ENCODE measurements at regions of chr17 and their contacts with region 1.

Region 1: DNA sequence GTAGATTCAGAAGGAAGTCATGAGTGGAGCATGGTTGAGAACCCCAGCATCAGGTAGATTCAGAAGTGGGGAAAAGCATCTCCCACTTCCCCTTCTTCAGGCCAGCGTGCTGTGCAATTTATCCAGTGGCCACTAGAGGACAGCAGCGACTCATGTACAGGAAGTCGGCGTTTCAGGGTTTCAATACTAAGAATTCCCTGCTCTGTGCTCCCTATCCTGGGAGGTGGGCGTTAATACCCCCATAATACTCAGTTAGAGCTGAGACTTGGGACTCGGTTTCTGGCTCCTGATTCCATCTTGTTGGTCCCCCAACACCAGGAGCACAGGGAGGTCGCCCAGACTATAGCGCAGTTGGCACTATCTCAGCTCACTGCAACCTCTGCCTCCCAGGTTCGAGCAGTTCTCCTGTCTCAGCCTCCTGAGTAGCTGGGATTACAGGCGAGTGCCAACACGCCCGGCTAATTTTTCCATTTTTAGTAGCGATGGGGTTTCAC is 75.3 kb upstream of the AMZ2 start:
- DNase-seq: peak; percentile 62 to 87 (median 72)
- ATAC-seq: peak; percentile 82
- H3K4me3 ChIP-seq: no peak overlapping the region
- H3K4me3 Mint-ChIP-seq: no peak overlapping the region
- H3K27ac ChIP-seq: no peak overlapping the region
- H3K27ac Mint-ChIP-seq: no peak overlapping the region
- H3K4me1 ChIP-seq: peaks cover 6% of the 10 kb centered on the region
- H3K4me1 Mint-ChIP-seq: peaks cover 17% of the 10 kb centered on the region
- H3K27me3 ChIP-seq: no peaks in the 10 kb centered on the region
- H3K27me3 Mint-ChIP-seq: no peaks in the 10 kb centered on the region
- CTCF ChIP-seq: peak; percentile 99

Region 2: GRCh38 chr17:67959288-67959900 is 213.1 kb before region 1 on chr17:
- CTCF ChIA-PET with region 1: no interaction called
- POLR2A ChIA-PET with region 1: no interaction called
- intact Hi-C with region 1: loop called in 1 of 2 experiments (anchors 10 kb)
- DNase-seq: no peak
- ATAC-seq: no peak
- H3K4me3 ChIP-seq: no peak overlapping the region
- H3K4me3 Mint-ChIP-seq: no peak overlapping the region
- H3K27ac ChIP-seq: no peak overlapping the region
- H3K27ac Mint-ChIP-seq: peak overlapping the region; percentile 32
- H3K4me1 ChIP-seq: no peaks in the 10 kb centered on the region
- H3K4me1 Mint-ChIP-seq: peaks cover 5% of the 10 kb centered on the region
- H3K27me3 ChIP-seq: no peaks in the 10 kb centered on the region
- H3K27me3 Mint-ChIP-seq: no peaks in the 10 kb centered on the region
- CTCF ChIP-seq: no peak

Region 3: GRCh38 chr17:68205251-68205807 is 32.8 kb after region 1 on chr17:
- CTCF ChIA-PET with region 1: interaction called, 34 read pairs
- POLR2A ChIA-PET with region 1: interaction called, 15 read pairs
- intact Hi-C with region 1: loop called (anchors 1 to 2 kb)
- DNase-seq: peak; percentile 82 to 96 (median 92)
- ATAC-seq: peak; percentile 73
- H3K4me3 ChIP-seq: peak overlapping the region; percentile 70
- H3K4me3 Mint-ChIP-seq: peak overlapping the region; percentile 94
- H3K27ac ChIP-seq: peak overlapping the region; percentile 58 to 76
- H3K27ac Mint-ChIP-seq: peak overlapping the region; percentile 84
- H3K4me1 ChIP-seq: peaks cover 33% of the 10 kb centered on the region
- H3K4me1 Mint-ChIP-seq: peaks cover 36% of the 10 kb centered on the region
- H3K27me3 ChIP-seq: no peaks in the 10 kb centered on the region
- H3K27me3 Mint-ChIP-seq: peaks cover 5% of the 10 kb centered on the region
- CTCF ChIP-seq: peak; percentile 87

Region 4: GRCh38 chr17:68221760-68222159 is 49.3 kb after region 1 on chr17:
- CTCF ChIA-PET with region 1: no interaction called
- POLR2A ChIA-PET with region 1: no interaction called
- intact Hi-C with region 1: no loop called
- DNase-seq: no peak
- ATAC-seq: no peak
- H3K4me3 ChIP-seq: no peak overlapping the region
- H3K4me3 Mint-ChIP-seq: no peak overlapping the region
- H3K27ac ChIP-seq: no peak overlapping the region
- H3K27ac Mint-ChIP-seq: peak overlapping the region; percentile 2
- H3K4me1 ChIP-seq: peaks cover 4% of the 10 kb centered on the region
- H3K4me1 Mint-ChIP-seq: peaks cover 11% of the 10 kb centered on the region
- H3K27me3 ChIP-seq: no peaks in the 10 kb centered on the region
- H3K27me3 Mint-ChIP-seq: no peaks in the 10 kb centered on the region
- CTCF ChIP-seq: no peak

Region 5: DNA sequence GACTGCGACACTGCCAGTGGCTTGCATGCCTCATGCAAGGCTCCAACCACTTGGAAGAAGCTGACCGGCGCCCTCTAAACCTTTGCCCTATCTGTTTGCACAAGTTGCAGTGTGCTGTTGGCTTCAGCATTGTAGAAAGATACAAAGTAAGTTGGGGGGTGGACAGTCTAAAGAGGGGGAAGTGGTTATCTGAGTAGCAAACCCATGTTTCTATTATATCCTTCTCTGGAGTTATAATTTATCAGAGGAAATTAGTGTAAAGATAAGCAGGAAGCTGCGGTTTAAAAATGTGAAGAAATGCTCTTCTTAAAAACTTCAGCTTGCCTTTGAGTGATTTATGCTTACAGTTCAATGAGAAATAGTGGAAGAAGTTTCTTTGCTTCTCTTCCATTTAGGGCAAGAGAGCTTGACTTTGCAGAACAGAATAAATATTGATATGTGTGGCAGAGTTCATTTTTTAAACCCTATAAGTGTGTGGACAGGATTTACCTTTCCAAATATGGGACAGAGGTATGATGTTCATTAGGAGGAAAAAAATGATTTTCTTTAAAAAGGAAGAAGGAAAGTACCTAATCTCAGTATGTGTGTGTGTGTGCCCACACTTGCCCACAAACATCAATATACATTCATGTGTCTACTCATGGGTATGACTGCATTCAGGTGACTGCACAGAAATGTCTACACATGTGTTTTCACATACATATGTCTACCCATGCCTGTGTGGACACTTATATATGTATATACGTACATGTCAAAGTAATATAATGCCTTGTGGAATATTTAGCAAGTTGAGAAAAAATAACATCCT is 83.4 kb after region 1 on chr17:
- CTCF ChIA-PET with region 1: interaction called, 3 read pairs
- POLR2A ChIA-PET with region 1: no interaction called
- intact Hi-C with region 1: loop called in 1 of 2 experiments (anchors 5 kb)
- DNase-seq: peak in 3 of 14 experiments; percentile 54 to 81 (median 68)
- ATAC-seq: peak; percentile 36
- H3K4me3 ChIP-seq: no peak overlapping the region
- H3K4me3 Mint-ChIP-seq: peak overlapping the region; percentile 21
- H3K27ac ChIP-seq: peak overlapping the region; percentile 1 to 84
- H3K27ac Mint-ChIP-seq: peak overlapping the region; percentile 96
- H3K4me1 ChIP-seq: peaks cover 61% of the 10 kb centered on the region
- H3K4me1 Mint-ChIP-seq: peaks cover 88% of the 10 kb centered on the region
- H3K27me3 ChIP-seq: no peaks in the 10 kb centered on the region
- H3K27me3 Mint-ChIP-seq: no peaks in the 10 kb centered on the region
- CTCF ChIP-seq: no peak

Region 6: DNA sequence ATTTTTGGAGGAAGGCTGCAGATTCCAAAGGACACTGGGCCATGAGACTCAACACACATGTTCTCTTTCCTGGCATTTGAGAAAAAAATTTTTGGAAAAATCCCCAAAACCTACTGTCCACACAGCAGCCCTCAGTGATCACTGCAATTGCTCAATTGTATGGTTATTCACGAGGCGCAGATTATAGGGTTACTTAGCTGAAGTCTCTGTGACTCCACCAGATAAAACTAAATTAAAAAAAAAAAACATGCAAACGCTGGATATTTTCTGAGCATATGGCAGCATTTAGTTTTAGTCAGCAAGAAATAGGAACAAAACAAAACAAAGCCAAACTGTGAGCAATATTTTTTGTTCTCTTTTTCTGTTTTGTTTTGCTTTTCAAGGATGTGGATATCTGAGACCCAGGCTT is 512.4 kb after region 1 on chr17:
- CTCF ChIA-PET with region 1: no interaction called
- POLR2A ChIA-PET with region 1: no interaction called
- intact Hi-C with region 1: no loop called
- DNase-seq: no peak
- ATAC-seq: no peak
- H3K4me3 ChIP-seq: no peak overlapping the region
- H3K4me3 Mint-ChIP-seq: no peak overlapping the region
- H3K27ac ChIP-seq: no peak overlapping the region
- H3K27ac Mint-ChIP-seq: no peak overlapping the region
- H3K4me1 ChIP-seq: no peaks in the 10 kb centered on the region
- H3K4me1 Mint-ChIP-seq: no peaks in the 10 kb centered on the region
- H3K27me3 ChIP-seq: peaks cover 0 to 4% of the 10 kb centered on the region in 2 experiments
- H3K27me3 Mint-ChIP-seq: peaks cover 17% of the 10 kb centered on the region
- CTCF ChIP-seq: no peak

Region 7: GRCh38 chr17:69246726-69247375 is 1074.3 kb after region 1 on chr17:
- CTCF ChIA-PET with region 1: no interaction called
- POLR2A ChIA-PET with region 1: no interaction called
- intact Hi-C with region 1: loop called in 1 of 2 experiments (anchors 5 kb)
- DNase-seq: peak in 3 of 14 experiments; percentile 40 to 58 (median 46)
- ATAC-seq: no peak
- H3K4me3 ChIP-seq: no peak overlapping the region
- H3K4me3 Mint-ChIP-seq: no peak overlapping the region
- H3K27ac ChIP-seq: no peak overlapping the region
- H3K27ac Mint-ChIP-seq: no peak overlapping the region
- H3K4me1 ChIP-seq: no peaks in the 10 kb centered on the region
- H3K4me1 Mint-ChIP-seq: no peaks in the 10 kb centered on the region
- H3K27me3 ChIP-seq: no peaks in the 10 kb centered on the region
- H3K27me3 Mint-ChIP-seq: no peaks in the 10 kb centered on the region
- CTCF ChIP-seq: peak; percentile 85

Measured in CD4-positive, alpha-beta T cell (primary cell).